ENCODE measurements at regions of chr11 and their contacts with region 1.

Region 1: DNA sequence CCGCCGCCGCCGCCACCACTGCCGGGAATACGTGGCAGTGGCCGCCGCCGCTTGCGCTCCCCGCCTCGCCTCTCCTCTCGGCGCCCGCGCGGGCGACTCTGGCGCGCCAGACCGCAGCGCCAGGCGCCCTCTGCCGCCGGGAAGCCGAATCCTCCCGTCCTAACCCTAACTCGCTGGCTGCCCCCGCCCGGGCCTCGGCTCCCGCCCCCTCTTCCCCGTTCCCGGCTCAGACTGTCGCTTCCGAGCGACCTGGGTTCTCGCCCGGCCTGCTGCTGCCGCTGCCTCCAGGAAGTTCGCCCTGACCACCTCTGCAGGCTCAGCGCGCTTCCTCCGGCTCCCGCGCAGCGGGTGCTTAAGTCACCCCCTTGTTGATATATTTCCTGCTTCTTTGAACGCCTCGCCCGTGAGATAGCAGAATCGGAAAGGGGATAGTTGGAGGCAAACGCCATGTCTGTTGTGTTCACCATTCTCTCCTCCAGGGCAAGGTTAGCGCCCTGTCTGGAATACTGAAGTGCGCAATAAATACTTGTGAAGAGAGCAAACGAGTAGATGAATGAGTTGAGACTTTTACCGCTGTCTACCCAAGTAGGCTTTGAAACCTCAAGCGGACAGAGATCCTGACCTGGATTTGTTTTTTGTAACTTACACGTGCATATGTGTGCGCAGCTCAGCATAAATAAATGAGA is at the start of gene SMCO4:
- DNase-seq: peak; percentile 87
- H3K4me3 Mint-ChIP-seq: peak within 1 kb of the TSS; percentile 87
- H3K27ac Mint-ChIP-seq: peak within 1 kb of the TSS; percentile 85
- H3K4me1 Mint-ChIP-seq: peaks cover 33% of the 10 kb centered on the region
- H3K27me3 Mint-ChIP-seq: no peaks in the 10 kb centered on the region
- total RNA-seq, gene SMCO4: 40.9 to 41.2 TPM

Region 2: DNA sequence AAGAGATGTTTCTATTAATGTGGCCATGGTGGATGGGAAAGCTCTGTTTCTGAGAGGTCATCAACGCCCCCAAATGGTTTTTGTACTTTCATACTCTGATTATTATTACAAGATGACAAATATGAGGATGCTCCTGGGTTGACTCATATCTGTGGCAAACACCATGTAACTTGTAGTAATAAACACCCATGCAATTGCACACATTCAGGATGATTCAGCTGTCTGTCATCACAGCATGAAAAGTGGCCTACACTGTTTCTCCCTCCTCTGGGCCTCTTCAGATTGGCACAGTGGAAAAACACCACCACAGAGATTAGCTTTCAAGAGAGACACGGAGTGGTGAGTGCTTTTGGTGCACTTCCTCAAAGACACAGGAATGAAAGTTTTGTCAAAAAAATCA is 488.6 kb before region 1 on chr11:
- CTCF ChIA-PET with region 1: no interaction called
- POLR2A ChIA-PET with region 1: no interaction called
- intact Hi-C with region 1: loop called (anchors 10 kb)
- DNase-seq: peak; percentile 43
- H3K4me3 Mint-ChIP-seq: peak overlapping the region; percentile 7
- H3K27ac Mint-ChIP-seq: peak overlapping the region; percentile 75
- H3K4me1 Mint-ChIP-seq: peaks cover 8% of the 10 kb centered on the region
- H3K27me3 Mint-ChIP-seq: peaks cover 6% of the 10 kb centered on the region

Region 3: GRCh38 chr11:93234602-93235207 is 308.7 kb before region 1 on chr11:
- CTCF ChIA-PET with region 1: interaction called, 20 read pairs
- POLR2A ChIA-PET with region 1: no interaction called
- intact Hi-C with region 1: loop called (anchors 1 kb)
- DNase-seq: peak; percentile 81
- H3K4me3 Mint-ChIP-seq: no peak overlapping the region
- H3K27ac Mint-ChIP-seq: no peak overlapping the region
- H3K4me1 Mint-ChIP-seq: no peaks in the 10 kb centered on the region
- H3K27me3 Mint-ChIP-seq: peaks cover 18% of the 10 kb centered on the region

Region 4: DNA sequence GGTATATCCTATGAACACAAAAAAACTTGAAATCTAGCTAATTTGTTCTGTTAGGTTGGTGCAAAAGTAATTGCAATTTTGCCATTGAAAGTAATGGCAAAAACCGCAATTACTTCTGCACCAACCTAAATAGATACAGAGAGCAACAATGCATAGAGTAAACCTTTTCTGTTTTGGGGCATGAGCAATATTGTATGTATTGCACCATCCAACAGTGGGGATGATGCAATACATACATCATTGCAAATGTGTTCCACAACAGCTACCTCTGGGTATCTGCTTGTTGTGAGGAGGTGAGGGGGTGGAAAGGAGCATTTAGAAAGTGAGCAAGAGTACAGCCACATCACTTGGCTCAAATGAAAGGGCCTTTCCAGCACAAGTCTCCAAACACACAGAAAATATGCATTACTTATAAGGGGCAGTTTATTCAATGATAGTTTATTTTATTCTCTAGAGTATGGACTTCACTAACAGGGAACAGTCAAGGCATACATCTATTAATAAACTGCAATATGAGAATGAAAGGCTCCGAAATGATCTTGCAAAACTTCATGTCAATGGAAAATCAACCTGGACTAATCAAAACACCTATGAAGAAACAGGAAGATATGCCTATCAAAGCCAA is 135.5 kb before region 1 on chr11:
- CTCF ChIA-PET with region 1: no interaction called
- POLR2A ChIA-PET with region 1: no interaction called
- intact Hi-C with region 1: no loop called
- DNase-seq: no peak
- H3K4me3 Mint-ChIP-seq: no peak overlapping the region
- H3K27ac Mint-ChIP-seq: no peak overlapping the region
- H3K4me1 Mint-ChIP-seq: no peaks in the 10 kb centered on the region
- H3K27me3 Mint-ChIP-seq: peaks cover 4% of the 10 kb centered on the region

Region 5: GRCh38 chr11:93512073-93512475 is 31.4 kb before region 1 on chr11:
- CTCF ChIA-PET with region 1: no interaction called
- POLR2A ChIA-PET with region 1: interaction called, 3 read pairs
- intact Hi-C with region 1: loop called (anchors 2 kb)
- DNase-seq: peak; percentile 50
- H3K4me3 Mint-ChIP-seq: no peak overlapping the region
- H3K27ac Mint-ChIP-seq: peak overlapping the region; percentile 62
- H3K4me1 Mint-ChIP-seq: peaks cover 13% of the 10 kb centered on the region
- H3K27me3 Mint-ChIP-seq: no peaks in the 10 kb centered on the region

Region 6: DNA sequence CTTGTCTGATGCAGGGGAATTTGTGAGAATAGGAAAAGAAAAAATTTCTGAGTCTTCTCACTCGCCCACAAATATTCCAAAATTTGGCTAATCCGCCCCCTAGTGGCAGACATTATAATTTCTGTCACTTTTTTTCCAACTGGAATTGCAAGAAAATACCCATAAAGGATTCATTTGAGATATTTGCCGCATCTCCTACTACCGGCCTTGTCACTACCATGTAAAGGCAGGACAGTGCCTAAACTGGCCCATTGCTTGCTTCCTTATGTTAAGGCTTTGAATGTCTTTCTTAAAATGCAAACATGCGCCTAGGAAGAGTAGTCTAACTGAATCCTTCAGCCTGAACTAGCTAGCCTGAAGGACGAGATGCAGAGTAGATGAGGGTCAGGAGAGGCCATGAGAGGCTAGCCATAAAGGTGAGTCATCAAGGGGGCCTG is 108.7 kb after region 1 on chr11:
- CTCF ChIA-PET with region 1: interaction called, 3 read pairs
- POLR2A ChIA-PET with region 1: no interaction called
- intact Hi-C with region 1: loop called (anchors 2 kb)
- DNase-seq: no peak
- H3K4me3 Mint-ChIP-seq: no peak overlapping the region
- H3K27ac Mint-ChIP-seq: no peak overlapping the region
- H3K4me1 Mint-ChIP-seq: peaks cover 12% of the 10 kb centered on the region
- H3K27me3 Mint-ChIP-seq: peaks cover 4% of the 10 kb centered on the region

Region 7: DNA sequence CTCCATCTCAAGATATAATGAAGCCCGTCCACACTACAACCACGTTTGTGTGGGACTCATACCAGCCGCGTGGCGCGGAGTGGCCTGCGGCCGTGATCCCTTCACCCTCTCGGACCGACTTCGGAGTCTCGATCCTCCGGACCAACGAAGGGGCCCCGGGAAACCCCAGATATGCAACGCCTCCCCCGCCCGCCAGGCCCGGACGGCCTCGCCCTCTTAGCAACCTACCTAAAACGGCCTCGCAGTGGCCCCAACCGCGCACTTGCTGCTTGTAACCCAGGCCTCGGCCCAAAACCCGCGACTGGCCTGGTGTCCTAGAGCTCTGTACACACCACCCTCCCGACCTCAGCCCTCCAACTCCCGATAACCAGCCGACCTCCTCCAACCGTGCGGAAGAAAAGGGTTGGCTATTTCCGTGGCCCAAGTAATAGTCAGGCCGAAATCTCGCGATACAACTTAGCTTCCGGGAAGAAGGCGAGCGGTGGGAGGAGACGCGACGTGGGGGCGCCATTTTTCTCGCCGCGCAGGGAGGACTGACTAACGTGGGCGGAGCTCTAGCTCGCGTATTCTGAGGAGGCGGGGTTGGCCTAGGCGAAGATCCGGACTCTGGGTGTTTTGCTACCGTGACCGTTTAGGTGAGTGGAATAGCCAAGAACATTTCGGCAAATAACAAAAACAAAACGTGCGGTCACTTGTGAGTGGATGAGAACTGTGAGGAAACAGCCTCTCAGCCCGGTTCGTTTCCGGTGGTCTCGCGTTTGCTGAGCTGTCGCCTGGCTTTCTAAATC is 197.9 kb after region 1 on chr11 and contains the starts of genes C11orf54 and TAF1D:
- CTCF ChIA-PET with region 1: no interaction called
- POLR2A ChIA-PET with region 1: interaction called, 3 read pairs
- intact Hi-C with region 1: loop called (anchors 2 kb)
- DNase-seq: peak; percentile 97
- H3K4me3 Mint-ChIP-seq: peak within 1 kb of the TSS; percentile 100
- H3K27ac Mint-ChIP-seq: peak within 1 kb of the TSS; percentile 100
- H3K4me1 Mint-ChIP-seq: peaks cover 39% of the 10 kb centered on the region
- H3K27me3 Mint-ChIP-seq: no peaks in the 10 kb centered on the region
- total RNA-seq, gene C11orf54: 21.6 to 23.7 TPM
- total RNA-seq, gene TAF1D: 325 to 342 TPM

Measured in activated CD4-positive, alpha-beta memory T cell treated with anti-CD3 and anti-CD28 coated beads for 36 hours (primary cell).